ENCODE measurements at regions of chr2 and their contacts with region 1.

Region 1: GRCh38 chr2:43178602-43179542 is 47.5 kb downstream of the ZFP36L2 start:
- DNase-seq: peak; percentile 90 to 91
- H3K4me3 ChIP-seq: peak overlapping the region; percentile 33; the same call in 1 of the 2 replicates
- H3K27ac ChIP-seq: peak overlapping the region; percentile 88
- H3K4me1 ChIP-seq: peaks cover 95% of the 10 kb centered on the region
- H3K27me3 ChIP-seq: no peaks in the 10 kb centered on the region
- CTCF ChIP-seq: no peak

Region 2: GRCh38 chr2:43194121-43194869 is 15.4 kb after region 1 on chr2:
- CTCF ChIA-PET with region 1: no interaction called
- POLR2A ChIA-PET with region 1: no interaction called
- intact Hi-C with region 1: no loop called
- DNase-seq: no peak
- H3K4me3 ChIP-seq: no peak overlapping the region
- H3K27ac ChIP-seq: no peak overlapping the region
- H3K4me1 ChIP-seq: peaks cover 28% of the 10 kb centered on the region
- H3K27me3 ChIP-seq: no peaks in the 10 kb centered on the region
- CTCF ChIP-seq: no peak

Region 3: GRCh38 chr2:43207553-43208293 is 28.9 kb after region 1 on chr2:
- CTCF ChIA-PET with region 1: interaction called, 3 read pairs
- POLR2A ChIA-PET with region 1: no interaction called
- intact Hi-C with region 1: loop called (anchors 1 kb)
- DNase-seq: peak; percentile 50 to 91
- H3K4me3 ChIP-seq: peak overlapping the region; percentile 6; the same call in 1 of the 2 replicates
- H3K27ac ChIP-seq: peak overlapping the region; percentile 84
- H3K4me1 ChIP-seq: peaks cover 51% of the 10 kb centered on the region
- H3K27me3 ChIP-seq: no peaks in the 10 kb centered on the region
- CTCF ChIP-seq: no peak